ENCODE measurements at regions of chr11 and their contacts with region 1.

Region 1: GRCh38 chr11:123580557-123581275 is 73.7 kb downstream of the SCN3B start:
- DNase-seq: peak; percentile 85

Region 2: DNA sequence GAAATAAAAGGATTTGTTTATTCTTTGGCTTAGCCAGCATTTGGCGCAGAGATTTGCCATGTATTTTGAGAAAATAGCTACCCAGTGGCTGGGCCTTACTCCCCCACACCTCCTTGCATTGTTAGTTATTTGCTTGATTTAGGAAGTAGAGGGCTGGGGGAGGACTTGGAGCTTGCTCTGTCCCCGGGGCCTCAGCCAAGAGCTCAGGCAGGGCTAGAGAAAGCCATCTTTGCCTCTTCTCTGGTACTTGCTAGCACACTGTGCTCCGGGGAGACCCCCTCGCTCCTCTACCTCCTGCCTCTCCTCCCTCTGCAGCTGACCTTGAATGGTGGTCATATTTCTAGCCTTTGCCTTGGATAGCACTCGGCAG is 19.3 kb before region 1 on chr11:
- CTCF ChIA-PET with region 1: interaction called, 10 read pairs
- POLR2A ChIA-PET with region 1: interaction called, 3 read pairs
- DNase-seq: no peak

Region 3: DNA sequence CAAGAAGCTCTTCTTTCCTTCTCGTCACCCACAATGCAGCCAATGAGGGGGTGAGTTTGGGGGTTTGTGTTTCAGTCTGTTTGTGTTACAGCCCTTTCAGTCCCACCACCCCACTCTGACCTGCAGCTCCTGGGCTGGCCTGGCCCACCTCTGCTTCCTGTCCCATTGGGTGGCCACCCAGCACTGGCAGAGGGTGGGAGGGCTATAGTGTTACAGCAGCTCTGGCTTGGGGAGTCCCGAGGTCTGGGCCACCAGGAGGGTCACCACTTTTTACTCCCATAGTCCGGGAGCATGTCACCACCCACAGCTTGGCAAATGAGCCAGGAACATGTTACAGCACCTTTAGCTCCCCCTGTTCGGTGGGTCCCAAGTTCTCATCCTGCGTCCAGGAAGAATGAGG is 398.6 kb after region 1 on chr11:
- CTCF ChIA-PET with region 1: no interaction called
- POLR2A ChIA-PET with region 1: no interaction called
- DNase-seq: no peak